ENCODE measurements at regions of chr11 and their contacts with region 1.

Region 1: DNA sequence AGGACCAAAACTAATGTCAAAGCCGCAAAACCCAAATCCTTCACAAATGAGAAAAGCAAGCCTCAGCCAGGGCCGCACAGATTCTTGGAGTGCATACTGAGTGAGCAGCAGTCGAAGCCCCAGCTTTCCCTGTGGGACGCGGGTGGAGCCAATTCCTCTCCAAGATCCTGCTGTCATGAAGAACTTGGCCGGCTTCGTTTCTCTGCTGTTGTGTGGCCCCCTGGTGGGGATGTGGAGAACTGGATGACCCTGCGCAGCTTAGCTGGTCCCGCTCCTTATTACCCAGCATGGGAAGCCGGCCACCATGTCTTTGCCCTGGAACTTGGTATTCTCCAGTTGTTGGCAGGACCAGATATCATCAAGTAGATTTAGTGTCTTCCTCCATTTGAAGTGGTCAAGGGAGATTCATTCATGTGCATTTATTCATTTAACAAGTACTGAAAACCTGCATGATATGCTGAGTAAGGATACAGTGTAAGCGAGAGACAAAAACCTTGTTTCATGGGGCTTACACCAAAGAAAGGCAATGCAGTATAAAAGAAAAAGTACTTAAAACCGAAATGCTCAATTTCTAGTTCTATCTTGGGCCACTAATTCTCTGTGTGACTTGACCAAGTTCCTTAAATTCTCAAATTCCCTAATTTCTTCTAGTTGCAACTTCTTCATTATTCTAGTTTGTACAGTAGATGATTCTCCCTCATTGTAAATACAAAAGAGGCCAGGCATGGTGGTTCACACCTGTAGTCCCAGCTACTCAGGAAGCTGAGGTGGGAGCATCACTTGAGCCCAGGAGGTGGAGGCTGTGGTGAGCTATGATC is 56.7 kb upstream of the CRTAM start:
- DNase-seq: peak; percentile 84 to 96 (median 92)
- H3K4me3 ChIP-seq: no peak overlapping the region
- H3K27ac ChIP-seq: no peak overlapping the region
- H3K4me1 ChIP-seq: peaks cover 8 to 15% of the 10 kb centered on the region in 2 donors
- H3K27me3 ChIP-seq: no peaks in the 10 kb centered on the region
- CTCF ChIP-seq: peak; percentile 92 to 95 (median 94)
- POLR2A ChIP-seq: no peak

Region 2: DNA sequence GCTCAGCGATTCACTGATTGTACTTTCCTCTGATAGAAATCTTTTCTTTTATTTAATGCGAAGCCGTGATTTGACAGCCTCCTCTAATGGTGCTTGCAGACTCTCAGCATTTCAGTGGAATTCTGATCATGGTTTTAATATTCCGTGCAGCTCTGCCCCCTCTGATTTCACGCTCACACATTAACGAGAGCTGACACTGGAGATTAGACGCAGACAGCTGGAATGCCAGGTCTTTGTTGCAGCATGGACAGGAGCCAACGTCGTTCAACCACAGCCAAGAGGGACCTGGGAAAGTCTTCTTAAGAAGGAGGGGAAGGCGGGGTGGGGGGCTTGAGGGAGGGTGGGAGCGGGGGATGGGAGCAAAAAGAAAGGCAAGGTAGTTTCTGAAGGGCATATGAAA is 852.0 kb before region 1 on chr11:
- intact Hi-C with region 1: no loop called
- DNase-seq: peak in 5 of 7 donors; percentile 15 to 55 (median 21)
- H3K4me3 ChIP-seq: peak overlapping the region in 1 of 4 donors; percentile 53
- H3K27ac ChIP-seq: peak overlapping the region in 3 of 5 donors; percentile 43 to 59 (median 52)
- H3K4me1 ChIP-seq: peaks cover 9 to 13% of the 10 kb centered on the region in 2 donors
- H3K27me3 ChIP-seq: no peaks in the 10 kb centered on the region
- CTCF ChIP-seq: no peak
- POLR2A ChIP-seq: no peak

Region 3: GRCh38 chr11:122584670-122585069 is 196.9 kb before region 1 on chr11:
- intact Hi-C with region 1: loop called in 1 of 2 experiments (anchors 5 kb)
- DNase-seq: no peak
- H3K4me3 ChIP-seq: no peak overlapping the region
- H3K27ac ChIP-seq: no peak overlapping the region
- H3K4me1 ChIP-seq: peaks cover 0 to 4% of the 10 kb centered on the region in 2 donors
- H3K27me3 ChIP-seq: no peaks in the 10 kb centered on the region
- CTCF ChIP-seq: no peak
- POLR2A ChIP-seq: no peak

Region 4: DNA sequence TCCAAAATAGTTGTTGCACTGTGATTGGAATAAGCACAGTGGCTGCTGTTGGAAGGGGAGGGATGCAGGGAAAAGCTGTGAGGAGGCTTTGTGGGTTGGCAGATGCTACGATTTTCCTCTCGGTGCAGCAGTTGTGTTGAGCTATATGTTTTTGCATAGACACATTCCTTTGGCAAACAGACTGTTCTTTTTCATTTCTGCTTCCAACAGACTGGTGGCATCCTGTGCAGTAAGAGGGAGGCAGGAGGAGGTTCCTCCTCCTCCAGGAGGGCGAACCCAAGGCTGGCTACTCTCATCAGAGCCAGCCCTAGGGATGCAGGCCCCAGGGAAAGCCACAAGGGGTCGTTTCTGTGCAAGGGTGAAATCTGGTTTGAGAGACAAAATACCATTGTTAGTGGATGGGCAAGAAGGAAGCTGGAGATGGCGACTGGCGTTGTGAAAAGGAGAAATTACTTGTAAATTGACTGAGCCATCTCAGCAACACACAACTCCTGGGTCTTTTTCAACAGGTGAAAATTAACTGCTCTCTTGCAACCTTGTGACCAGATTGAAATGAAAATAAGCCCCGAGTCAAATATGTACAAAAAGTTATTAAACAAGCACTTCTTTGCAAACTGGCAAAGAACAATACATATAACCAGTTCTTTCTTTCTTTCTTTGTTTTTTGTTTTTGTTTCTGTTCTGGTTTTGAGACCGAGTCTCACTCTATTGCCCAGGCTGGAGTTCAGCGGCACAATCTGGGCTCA is 152.6 kb before region 1 on chr11:
- intact Hi-C with region 1: loop called (anchors 2 to 5 kb)
- DNase-seq: peak; percentile 64 to 88 (median 73)
- H3K4me3 ChIP-seq: no peak overlapping the region
- H3K27ac ChIP-seq: no peak overlapping the region
- H3K4me1 ChIP-seq: no peaks in the 10 kb centered on the region
- H3K27me3 ChIP-seq: peaks cover 4% of the 10 kb centered on the region
- CTCF ChIP-seq: peak; percentile 65 to 91 (median 82)
- POLR2A ChIP-seq: no peak

Region 5: DNA sequence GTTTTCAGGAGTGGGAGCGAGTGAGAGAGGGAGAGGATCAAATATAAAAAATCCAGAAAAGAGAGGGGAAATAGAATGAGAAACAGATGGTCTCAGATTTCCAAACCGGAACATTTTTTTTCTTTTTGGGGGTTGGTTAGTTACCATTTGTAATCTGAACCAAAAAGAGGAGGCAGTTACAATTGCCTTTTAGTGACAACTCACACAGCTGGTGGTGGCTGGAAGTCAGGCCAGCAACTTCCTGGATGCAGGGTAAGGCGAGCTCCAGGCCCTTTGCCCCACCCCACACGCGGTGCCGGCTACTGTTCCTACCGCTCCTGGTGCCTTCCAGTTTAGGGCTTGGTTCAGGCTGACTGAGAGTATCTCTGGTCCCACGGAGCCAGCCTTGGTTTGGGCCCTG is 147.1 kb before region 1 on chr11:
- intact Hi-C with region 1: loop called (anchors 2 to 5 kb)
- DNase-seq: no peak
- H3K4me3 ChIP-seq: no peak overlapping the region
- H3K27ac ChIP-seq: no peak overlapping the region
- H3K4me1 ChIP-seq: no peaks in the 10 kb centered on the region
- H3K27me3 ChIP-seq: peaks cover 4% of the 10 kb centered on the region
- CTCF ChIP-seq: no peak
- POLR2A ChIP-seq: no peak

Region 6: DNA sequence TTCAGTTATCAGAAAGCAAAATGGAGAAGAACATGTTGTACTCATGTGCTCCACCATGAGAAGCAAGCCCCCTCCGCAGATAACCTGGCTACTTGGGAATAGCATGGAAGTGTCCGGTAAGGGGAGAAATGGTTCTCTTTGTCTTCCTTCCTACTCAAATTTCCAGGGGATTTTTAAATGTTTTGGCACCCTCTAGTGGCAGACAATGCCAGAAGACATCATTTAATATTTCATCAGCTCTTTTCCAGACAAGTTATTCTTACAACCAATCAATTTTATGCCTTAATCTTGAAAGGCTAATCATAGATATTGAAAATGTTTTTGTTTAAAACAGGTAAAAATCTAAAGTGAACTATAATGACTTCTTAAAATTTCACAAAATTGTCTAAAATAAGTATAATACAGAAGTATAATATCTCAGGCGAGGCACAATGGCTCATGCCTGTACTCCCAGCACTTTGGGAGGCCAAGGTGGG is 72.4 kb after region 1 on chr11:
- intact Hi-C with region 1: no loop called
- DNase-seq: peak; percentile 36 to 79 (median 61)
- H3K4me3 ChIP-seq: no peak overlapping the region
- H3K27ac ChIP-seq: no peak overlapping the region
- H3K4me1 ChIP-seq: no peaks in the 10 kb centered on the region
- H3K27me3 ChIP-seq: no peaks in the 10 kb centered on the region
- CTCF ChIP-seq: peak; percentile 74 to 82 (median 80)
- POLR2A ChIP-seq: no peak